ENCODE measurements at regions of chr2 and their contacts with region 1.

Region 1: GRCh38 chr2:196077821-196078220 is 9.2 kb upstream of the DNAH7 start:
- DNase-seq: no peak
- H3K4me3 Mint-ChIP-seq: no peak overlapping the region
- H3K27ac Mint-ChIP-seq: no peak overlapping the region
- H3K4me1 Mint-ChIP-seq: peaks cover 12% of the 10 kb centered on the region
- H3K27me3 Mint-ChIP-seq: no peaks in the 10 kb centered on the region

Region 2: GRCh38 chr2:196131384-196131937 is 53.6 kb after region 1 on chr2:
- intact Hi-C with region 1: loop called (anchors 2 kb)
- DNase-seq: peak; percentile 90
- H3K4me3 Mint-ChIP-seq: no peak overlapping the region
- H3K27ac Mint-ChIP-seq: peak overlapping the region; percentile 83
- H3K4me1 Mint-ChIP-seq: peaks cover 16% of the 10 kb centered on the region
- H3K27me3 Mint-ChIP-seq: no peaks in the 10 kb centered on the region

Region 3: GRCh38 chr2:196277002-196277401 is 199.2 kb after region 1 on chr2:
- intact Hi-C with region 1: loop called (anchors 1 kb)
- DNase-seq: peak; percentile 80
- H3K4me3 Mint-ChIP-seq: no peak overlapping the region
- H3K27ac Mint-ChIP-seq: no peak overlapping the region
- H3K4me1 Mint-ChIP-seq: peaks cover 48% of the 10 kb centered on the region
- H3K27me3 Mint-ChIP-seq: no peaks in the 10 kb centered on the region

Region 4: DNA sequence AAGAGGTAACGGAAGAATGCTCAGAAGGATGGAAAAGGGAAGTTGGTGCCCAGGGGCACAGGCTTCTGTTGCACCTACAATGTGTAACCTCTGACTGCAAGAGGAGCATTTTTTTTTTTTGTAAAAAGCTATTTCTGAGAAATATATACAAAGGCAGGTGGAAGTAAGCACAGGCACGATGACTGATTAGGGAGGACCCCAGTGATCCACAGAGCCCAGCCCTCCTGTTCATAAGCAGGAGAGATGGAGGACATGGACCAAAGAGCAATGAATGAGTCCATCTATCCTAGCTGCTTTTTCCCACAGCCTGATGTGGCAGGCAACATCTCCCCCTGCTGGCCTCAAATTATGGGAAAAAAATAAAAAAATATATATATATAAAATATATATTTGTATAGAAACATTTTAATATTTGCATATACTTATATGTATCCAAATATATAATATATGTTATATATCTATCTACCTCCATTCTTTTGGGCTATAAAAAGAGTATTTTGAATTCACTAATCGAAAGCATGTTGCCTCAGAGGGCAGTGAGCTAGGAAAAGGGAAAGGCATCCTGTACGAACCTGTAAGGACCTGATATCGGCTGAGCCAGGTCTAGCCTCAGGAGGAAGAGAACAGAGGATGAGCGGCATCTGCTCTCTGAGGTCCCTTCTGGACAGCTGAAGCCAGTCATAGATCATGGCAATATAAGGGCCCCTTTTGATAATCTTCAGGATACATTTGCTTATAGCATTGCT is 259.6 kb after region 1 on chr2:
- intact Hi-C with region 1: loop called (anchors 1 kb)
- DNase-seq: peak; percentile 68
- H3K4me3 Mint-ChIP-seq: no peak overlapping the region
- H3K27ac Mint-ChIP-seq: no peak overlapping the region
- H3K4me1 Mint-ChIP-seq: peaks cover 3% of the 10 kb centered on the region
- H3K27me3 Mint-ChIP-seq: peaks cover 10% of the 10 kb centered on the region

Region 5: DNA sequence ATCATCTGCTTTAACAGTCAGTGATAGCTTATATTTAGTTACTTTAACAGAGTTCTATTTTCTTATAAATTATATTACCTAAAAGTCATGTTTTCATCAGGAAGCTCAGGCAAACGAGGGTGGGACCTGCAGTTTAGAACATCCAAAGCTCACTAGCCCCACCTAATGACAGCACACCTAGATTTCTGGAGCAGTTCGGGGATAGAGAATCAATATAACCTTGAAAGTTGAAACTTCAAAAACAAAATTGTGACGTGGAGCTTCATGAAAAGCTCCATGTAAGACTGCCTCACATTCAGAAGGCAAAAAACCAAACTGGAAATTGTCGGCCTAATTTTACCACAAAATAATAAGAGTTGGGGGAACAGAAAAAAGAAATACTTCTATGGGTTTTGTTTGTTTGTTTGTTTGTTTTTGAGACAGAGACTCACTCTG is 375.8 kb after region 1 on chr2:
- intact Hi-C with region 1: loop called (anchors 2 kb)
- DNase-seq: peak; percentile 80
- H3K4me3 Mint-ChIP-seq: no peak overlapping the region
- H3K27ac Mint-ChIP-seq: no peak overlapping the region
- H3K4me1 Mint-ChIP-seq: peaks cover 1% of the 10 kb centered on the region
- H3K27me3 Mint-ChIP-seq: peaks cover 26% of the 10 kb centered on the region

Measured in activated CD4-positive, alpha-beta T cell treated with anti-CD3 and anti-CD28 coated beads, Interleukin-2, amount 10 ng/mL, durations not matched to agents 24 days and 14 days (primary cell).